Endothelial cell of umbilical vein (primary cell): ENCODE measurements at regions of chr4 and their contacts with region 1.

Region 1: DNA sequence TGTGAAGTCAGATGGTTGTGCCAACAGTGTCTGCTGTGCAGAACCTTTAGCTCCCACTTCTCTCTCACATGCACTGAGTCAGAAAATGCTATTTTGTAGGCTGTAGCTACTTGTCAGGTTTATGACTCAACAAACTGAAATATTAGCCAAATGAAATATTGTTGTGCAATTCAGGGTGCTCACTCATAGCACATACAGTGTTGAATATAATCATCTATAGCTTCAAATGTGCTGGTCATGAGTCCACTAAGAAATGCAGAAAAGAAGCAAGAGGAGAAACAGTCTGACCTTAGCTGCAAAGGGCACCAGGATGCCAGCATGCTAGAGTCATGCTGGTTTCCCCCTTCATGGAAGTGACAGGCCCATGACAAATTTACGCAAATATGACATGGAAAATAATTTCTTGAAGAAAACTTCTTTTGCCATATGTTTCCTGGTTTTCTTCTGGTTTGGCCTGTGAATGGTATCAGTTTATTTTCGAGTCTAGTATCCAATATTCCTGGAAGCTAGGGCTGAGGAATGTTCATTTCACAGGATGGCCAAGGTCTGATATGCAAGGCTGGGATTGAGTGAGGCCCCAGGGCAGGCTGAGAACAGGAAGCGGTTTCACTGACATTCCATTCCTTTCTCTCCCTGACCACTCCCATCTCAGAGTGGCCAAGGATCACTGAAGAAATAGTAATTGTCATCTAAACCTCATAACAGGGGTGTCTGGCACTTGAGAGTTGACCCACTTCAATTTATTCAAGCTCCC is 10.3 kb upstream of the CXCL2 start:
- DNase-seq: peak; percentile 93
- H3K4me3 ChIP-seq: no peak overlapping the region
- H3K27ac ChIP-seq: peak overlapping the region; percentile 92
- H3K4me1 ChIP-seq: peaks cover 44% of the 10 kb centered on the region
- H3K27me3 ChIP-seq: no peaks in the 10 kb centered on the region
- CTCF ChIP-seq: no peak
- POLR2A ChIP-seq: peak; percentile 59

Region 2: DNA sequence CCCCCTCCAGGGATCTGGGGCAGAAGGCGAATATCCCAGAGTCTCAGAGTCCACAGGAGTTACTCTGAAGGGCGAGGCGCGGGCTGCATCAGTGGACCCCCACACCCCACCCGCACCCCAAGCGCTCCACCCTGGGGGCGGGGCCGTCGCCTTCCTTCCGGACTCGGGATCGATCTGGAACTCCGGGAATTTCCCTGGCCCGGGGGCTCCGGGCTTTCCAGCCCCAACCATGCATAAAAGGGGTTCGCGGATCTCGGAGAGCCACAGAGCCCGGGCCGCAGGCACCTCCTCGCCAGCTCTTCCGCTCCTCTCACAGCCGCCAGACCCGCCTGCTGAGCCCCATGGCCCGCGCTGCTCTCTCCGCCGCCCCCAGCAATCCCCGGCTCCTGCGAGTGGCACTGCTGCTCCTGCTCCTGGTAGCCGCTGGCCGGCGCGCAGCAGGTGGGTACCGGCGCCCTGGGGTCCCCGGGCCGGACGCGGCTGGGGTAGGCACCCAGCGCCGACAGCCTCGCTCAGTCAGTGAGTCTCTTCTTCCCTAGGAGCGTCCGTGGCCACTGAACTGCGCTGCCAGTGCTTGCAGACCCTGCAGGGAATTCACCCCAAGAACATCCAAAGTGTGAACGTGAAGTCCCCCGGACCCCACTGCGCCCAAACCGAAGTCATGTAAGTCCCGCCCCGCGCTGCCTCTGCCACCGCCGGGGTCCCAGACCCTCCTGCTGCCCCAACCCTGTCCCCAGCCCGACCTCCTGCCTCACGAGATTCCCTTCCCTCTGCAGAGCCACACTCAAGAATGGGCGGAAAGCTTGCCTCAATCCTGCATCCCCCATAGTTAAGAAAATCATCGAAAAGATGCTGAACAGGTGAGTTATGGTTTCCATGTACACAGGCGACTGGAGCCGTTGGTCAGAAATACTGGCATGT is 239.9 kb before region 1 on chr4 and contains the start of gene CXCL1:
- CTCF ChIA-PET with region 1: no interaction called
- POLR2A ChIA-PET with region 1: interaction called, 10 read pairs
- dilution Hi-C with region 1: no loop called
- intact Hi-C with region 1: no loop called
- DNase-seq: peak; percentile 52
- H3K4me3 ChIP-seq: peak within 1 kb of the TSS; percentile 49 to 81 (median 67)
- H3K27ac ChIP-seq: peak within 1 kb of the TSS; percentile 55
- H3K4me1 ChIP-seq: peaks cover 35% of the 10 kb centered on the region
- H3K27me3 ChIP-seq: no peaks in the 10 kb centered on the region
- CTCF ChIP-seq: no peak
- POLR2A ChIP-seq: peak; percentile 68
- total RNA-seq, gene CXCL1: 9.0 and 20.0 TPM in 2 replicates

Region 3: GRCh38 chr4:74056858-74057562 is 52.3 kb before region 1 on chr4:
- CTCF ChIA-PET with region 1: no interaction called
- POLR2A ChIA-PET with region 1: no interaction called
- dilution Hi-C with region 1: no loop called
- intact Hi-C with region 1: no loop called
- DNase-seq: peak; percentile 20
- H3K4me3 ChIP-seq: no peak overlapping the region
- H3K27ac ChIP-seq: no peak overlapping the region
- H3K4me1 ChIP-seq: no peaks in the 10 kb centered on the region
- H3K27me3 ChIP-seq: no peaks in the 10 kb centered on the region
- CTCF ChIP-seq: no peak
- POLR2A ChIP-seq: no peak

Region 4: GRCh38 chr4:74092957-74093356 is 16.3 kb before region 1 on chr4:
- CTCF ChIA-PET with region 1: interaction called, 25 read pairs
- POLR2A ChIA-PET with region 1: no interaction called
- dilution Hi-C with region 1: no loop called
- intact Hi-C with region 1: loop called (anchors 1 kb)
- DNase-seq: peak; percentile 63
- H3K4me3 ChIP-seq: no peak overlapping the region
- H3K27ac ChIP-seq: peak overlapping the region; percentile 56
- H3K4me1 ChIP-seq: peaks cover 31% of the 10 kb centered on the region
- H3K27me3 ChIP-seq: no peaks in the 10 kb centered on the region
- CTCF ChIP-seq: no peak
- POLR2A ChIP-seq: no peak

Region 5: GRCh38 chr4:74098450-74098994 is 10.8 kb before region 1 on chr4:
- CTCF ChIA-PET with region 1: interaction called, 25 read pairs
- POLR2A ChIA-PET with region 1: interaction called, 12 read pairs
- dilution Hi-C with region 1: no loop called
- intact Hi-C with region 1: loop called (anchors 1 kb)
- DNase-seq: peak; percentile 38
- H3K4me3 ChIP-seq: peak overlapping the region; percentile 46 to 85 (median 69)
- H3K27ac ChIP-seq: peak overlapping the region; percentile 83
- H3K4me1 ChIP-seq: peaks cover 32% of the 10 kb centered on the region
- H3K27me3 ChIP-seq: no peaks in the 10 kb centered on the region
- CTCF ChIP-seq: no peak
- POLR2A ChIP-seq: no peak

Region 6: DNA sequence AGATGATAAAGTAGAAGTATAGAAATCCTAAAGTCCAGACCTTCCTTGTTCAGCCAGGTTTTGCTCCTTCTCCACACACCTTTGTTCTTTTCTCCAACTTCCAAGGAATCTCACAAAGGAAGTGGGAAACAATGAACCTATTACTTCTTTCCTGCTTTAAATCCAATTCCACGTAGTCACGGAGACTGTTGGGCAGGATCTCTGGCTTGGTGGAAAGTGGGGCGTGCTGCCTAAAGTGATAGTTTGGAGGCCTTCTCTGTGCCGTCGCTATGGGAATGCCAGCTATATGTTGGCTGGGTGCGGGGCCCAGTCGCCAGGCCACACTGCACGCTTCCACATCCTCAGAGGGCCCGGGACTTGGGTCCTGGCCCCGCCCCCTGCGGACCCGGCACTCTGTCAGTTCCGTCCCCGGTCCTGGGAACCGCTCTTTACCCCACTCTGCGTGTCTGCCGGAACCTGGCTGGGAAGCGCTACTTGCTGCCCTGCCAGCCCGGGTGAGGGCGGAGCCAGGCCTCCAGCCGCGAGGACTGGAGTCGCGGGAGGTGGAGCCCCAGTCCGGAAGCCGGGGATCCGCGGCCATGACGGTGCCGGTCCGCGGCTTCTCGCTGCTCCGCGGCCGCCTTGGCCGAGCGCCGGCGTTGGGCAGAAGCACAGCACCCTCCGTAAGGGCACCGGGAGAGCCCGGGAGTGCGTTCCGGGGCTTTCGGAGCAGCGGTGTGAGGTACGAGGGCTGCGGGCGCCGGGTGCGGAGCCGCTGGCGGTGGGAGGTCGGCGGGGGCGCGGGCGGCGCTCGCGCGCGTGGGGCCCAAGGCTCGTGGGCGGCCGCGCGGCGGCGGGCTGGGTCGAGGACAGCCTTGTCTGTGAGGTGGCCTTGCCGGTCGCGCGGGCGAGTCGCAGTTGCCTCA is 48.5 kb after region 1 on chr4 and contains the start of gene MTHFD2L:
- CTCF ChIA-PET with region 1: no interaction called
- POLR2A ChIA-PET with region 1: no interaction called
- dilution Hi-C with region 1: no loop called
- intact Hi-C with region 1: loop called (anchors 1 kb)
- DNase-seq: peak; percentile 96
- H3K4me3 ChIP-seq: peak within 1 kb of the TSS; percentile 73 to 97 (median 76)
- H3K27ac ChIP-seq: peak within 1 kb of the TSS; percentile 90
- H3K4me1 ChIP-seq: peaks cover 29% of the 10 kb centered on the region
- H3K27me3 ChIP-seq: no peaks in the 10 kb centered on the region
- CTCF ChIP-seq: no peak
- POLR2A ChIP-seq: peak; percentile 88
- total RNA-seq, gene MTHFD2L: 12.4 and 15.2 TPM in 2 replicates

Region 7: GRCh38 chr4:74632634-74633033 is 523.3 kb after region 1 on chr4:
- CTCF ChIA-PET with region 1: no interaction called
- POLR2A ChIA-PET with region 1: no interaction called
- dilution Hi-C with region 1: no loop called
- intact Hi-C with region 1: loop called (anchors 5 kb)
- DNase-seq: peak; percentile 99
- H3K4me3 ChIP-seq: no peak overlapping the region
- H3K27ac ChIP-seq: peak overlapping the region; percentile 75
- H3K4me1 ChIP-seq: peaks cover 45% of the 10 kb centered on the region
- H3K27me3 ChIP-seq: no peaks in the 10 kb centered on the region
- CTCF ChIP-seq: no peak
- POLR2A ChIP-seq: peak; percentile 76